Activated naive CD4-positive, alpha-beta T cell treated with anti-CD3 and anti-CD28 coated beads for 36 hours (primary cell): ENCODE measurements at regions of chr7 and their contacts with region 1.

Region 1: GRCh38 chr7:129433847-129434674 is at the start of gene STRIP2:
- DNase-seq: peak; percentile 94
- H3K4me3 Mint-ChIP-seq: peak within 1 kb of the TSS; percentile 89
- H3K27ac Mint-ChIP-seq: peak within 1 kb of the TSS; percentile 92
- H3K4me1 Mint-ChIP-seq: peaks cover 28% of the 10 kb centered on the region
- H3K27me3 Mint-ChIP-seq: peaks cover 7% of the 10 kb centered on the region
- total RNA-seq, gene STRIP2: 71.4 to 76.0 TPM

Region 2: DNA sequence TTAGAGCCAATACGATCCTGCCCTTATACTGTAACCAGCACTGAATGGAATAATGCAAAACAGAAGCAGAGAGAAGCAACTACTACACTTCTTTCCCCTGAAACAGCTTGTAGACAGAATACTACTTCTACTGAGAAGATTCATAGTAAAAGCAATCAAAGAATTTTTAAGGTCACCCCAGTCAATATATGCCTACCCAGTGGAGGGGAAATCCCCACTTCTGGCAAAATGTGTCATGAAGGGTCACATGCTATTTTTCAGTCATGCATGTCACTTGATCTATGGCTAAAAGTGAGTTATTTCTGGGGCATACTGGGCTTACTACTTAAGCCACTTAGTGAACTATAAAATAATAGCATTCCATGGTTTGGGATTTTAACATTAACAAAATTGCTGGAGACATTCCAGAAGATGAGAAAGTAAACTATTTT is 470.7 kb before region 1 on chr7:
- CTCF ChIA-PET with region 1: no interaction called
- intact Hi-C with region 1: loop called (anchors 1 kb)
- DNase-seq: peak; percentile 80
- H3K4me3 Mint-ChIP-seq: peak overlapping the region; percentile 6
- H3K27ac Mint-ChIP-seq: peak overlapping the region; percentile 87
- H3K4me1 Mint-ChIP-seq: peaks cover 35% of the 10 kb centered on the region
- H3K27me3 Mint-ChIP-seq: no peaks in the 10 kb centered on the region

Region 3: DNA sequence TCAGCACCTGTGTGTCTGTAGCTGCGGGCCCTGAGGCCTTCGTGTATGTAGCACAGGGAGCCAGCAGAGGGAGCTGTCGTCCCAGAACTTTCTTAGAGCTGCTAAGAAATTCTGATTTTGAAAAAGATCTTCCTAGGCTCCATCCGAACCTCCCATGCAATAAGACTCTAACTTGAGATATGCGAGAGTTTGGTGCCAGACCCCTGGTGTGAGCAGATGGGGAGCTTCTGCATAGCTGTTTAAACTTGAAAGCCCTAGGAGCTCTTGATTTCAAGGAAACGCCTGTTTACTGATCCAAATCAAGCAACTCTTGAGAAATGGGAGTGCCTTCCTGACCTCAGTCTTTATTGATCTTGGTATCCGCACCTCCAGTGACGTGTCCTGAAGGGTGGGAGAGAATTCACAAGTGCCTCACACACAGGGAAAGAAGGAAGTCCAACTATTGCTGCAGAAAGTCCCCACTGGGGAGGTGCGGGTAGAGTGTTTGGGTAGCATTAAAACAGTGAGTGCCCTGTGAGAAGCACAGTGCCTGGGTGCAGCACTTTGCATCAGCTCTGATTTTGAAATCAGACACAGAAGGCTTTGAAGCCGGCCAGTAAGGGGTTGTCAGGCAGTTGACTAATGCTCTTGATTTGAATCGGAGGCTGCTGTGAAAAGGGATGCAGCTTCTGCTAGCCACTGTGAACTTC is 66.2 kb before region 1 on chr7:
- CTCF ChIA-PET with region 1: interaction called, 26 read pairs
- intact Hi-C with region 1: loop called (anchors 1 kb)
- DNase-seq: peak; percentile 93
- H3K4me3 Mint-ChIP-seq: peak overlapping the region; percentile 63
- H3K27ac Mint-ChIP-seq: peak overlapping the region; percentile 94
- H3K4me1 Mint-ChIP-seq: peaks cover 45% of the 10 kb centered on the region
- H3K27me3 Mint-ChIP-seq: no peaks in the 10 kb centered on the region

Region 4: GRCh38 chr7:129401967-129402860 is 31.8 kb before region 1 on chr7:
- CTCF ChIA-PET with region 1: interaction called, 5 read pairs
- intact Hi-C with region 1: loop called (anchors 1 kb)
- DNase-seq: peak; percentile 74
- H3K4me3 Mint-ChIP-seq: no peak overlapping the region
- H3K27ac Mint-ChIP-seq: no peak overlapping the region
- H3K4me1 Mint-ChIP-seq: peaks cover 36% of the 10 kb centered on the region
- H3K27me3 Mint-ChIP-seq: no peaks in the 10 kb centered on the region

Region 5: DNA sequence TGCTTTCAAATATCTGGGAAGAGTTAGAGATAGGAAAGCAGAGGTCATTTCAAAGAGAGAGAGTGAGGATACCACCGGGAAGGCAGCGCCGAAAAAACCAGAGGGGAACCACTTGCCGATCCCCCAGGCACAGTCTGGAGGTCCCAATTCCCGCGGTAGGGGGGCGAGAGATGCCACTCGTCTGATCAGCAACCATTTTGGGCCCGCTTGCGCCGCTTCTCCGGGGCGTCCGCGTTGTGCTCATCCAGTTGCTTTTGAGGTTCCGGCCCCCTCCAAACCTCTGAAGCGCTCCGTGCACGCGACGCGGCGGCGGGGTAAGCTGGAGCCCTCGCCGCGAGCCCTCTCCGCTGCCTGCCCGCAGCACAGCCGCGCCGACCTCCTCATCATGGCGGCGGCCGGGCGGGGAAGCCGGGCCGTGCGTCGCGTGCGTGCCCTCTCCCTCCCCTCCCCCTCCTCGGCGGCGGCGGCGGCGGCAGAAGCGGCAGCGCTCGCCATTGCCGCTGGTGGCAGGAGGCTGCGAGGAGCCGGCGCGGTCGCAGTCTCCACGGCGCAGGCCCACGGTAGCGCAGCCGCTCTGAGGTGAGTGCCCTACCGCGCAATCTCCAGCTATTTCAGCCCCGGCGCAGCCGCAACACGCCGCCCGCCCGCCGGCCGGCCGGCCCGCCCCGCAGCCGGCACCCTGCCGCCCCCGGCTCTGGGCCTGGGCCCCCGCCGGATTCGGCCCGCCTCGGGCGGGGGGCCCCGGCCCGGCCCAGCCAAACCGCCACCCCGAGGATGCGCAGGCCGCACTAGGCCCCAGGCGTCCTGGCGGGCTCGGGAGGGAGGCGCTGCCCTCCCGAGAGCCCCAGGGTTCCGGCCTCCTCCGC is 177.4 kb after region 1 on chr7 and contains the start of gene NRF1:
- CTCF ChIA-PET with region 1: no interaction called
- intact Hi-C with region 1: loop called (anchors 1 kb)
- DNase-seq: peak; percentile 91
- H3K4me3 Mint-ChIP-seq: peak within 1 kb of the TSS; percentile 97
- H3K27ac Mint-ChIP-seq: peak within 1 kb of the TSS; percentile 98
- H3K4me1 Mint-ChIP-seq: peaks cover 56% of the 10 kb centered on the region
- H3K27me3 Mint-ChIP-seq: no peaks in the 10 kb centered on the region
- total RNA-seq, gene NRF1: 18.5 to 21.5 TPM

Region 6: DNA sequence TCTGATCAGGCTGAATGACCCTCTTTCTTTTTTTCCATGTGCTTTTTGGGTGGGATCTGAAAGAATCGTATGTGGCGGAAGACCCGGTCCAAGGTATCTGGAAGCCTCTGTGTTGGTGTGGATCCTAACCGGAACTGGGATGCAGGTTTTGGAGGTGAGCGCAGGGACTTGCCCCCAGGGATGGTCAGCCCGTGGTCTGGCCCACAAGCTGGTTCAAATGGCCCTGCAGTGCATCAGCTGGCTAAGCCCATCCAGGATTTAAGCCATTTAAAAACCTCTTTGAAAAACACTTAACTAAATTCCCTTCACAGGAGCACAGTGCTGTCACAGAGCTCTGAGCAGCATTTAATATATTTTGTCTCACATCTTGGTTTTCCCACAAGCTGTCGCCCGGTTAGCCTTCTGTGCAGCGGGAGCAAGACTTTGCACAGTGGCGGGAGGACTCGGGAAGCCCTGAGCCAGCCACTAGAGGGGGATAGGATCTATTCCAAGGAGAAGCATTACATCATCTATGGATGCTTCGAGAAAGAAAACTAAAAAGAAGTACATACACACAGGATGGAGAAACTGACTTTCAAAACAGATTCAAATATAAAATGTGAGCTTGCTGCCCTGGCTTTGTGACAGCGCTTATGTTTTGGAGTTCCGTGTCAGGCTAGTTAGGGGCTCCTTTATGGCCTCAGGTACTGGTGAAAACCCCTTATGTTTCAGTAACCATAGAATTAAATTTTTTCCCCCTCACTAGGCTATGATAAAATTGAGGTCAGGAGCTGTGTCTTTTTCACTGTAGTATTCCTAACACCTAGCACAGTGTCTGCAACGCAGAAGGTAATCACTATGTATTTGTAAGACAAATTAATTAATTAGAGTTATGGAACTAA is 843.9 kb after region 1 on chr7:
- CTCF ChIA-PET with region 1: no interaction called
- intact Hi-C with region 1: loop called (anchors 5 kb)
- DNase-seq: no peak
- H3K4me3 Mint-ChIP-seq: no peak overlapping the region
- H3K27ac Mint-ChIP-seq: peak overlapping the region; percentile 85
- H3K4me1 Mint-ChIP-seq: peaks cover 44% of the 10 kb centered on the region
- H3K27me3 Mint-ChIP-seq: no peaks in the 10 kb centered on the region